H1 (cell line): ENCODE measurements at regions of chr21 and their contacts with region 1.

Region 1: DNA sequence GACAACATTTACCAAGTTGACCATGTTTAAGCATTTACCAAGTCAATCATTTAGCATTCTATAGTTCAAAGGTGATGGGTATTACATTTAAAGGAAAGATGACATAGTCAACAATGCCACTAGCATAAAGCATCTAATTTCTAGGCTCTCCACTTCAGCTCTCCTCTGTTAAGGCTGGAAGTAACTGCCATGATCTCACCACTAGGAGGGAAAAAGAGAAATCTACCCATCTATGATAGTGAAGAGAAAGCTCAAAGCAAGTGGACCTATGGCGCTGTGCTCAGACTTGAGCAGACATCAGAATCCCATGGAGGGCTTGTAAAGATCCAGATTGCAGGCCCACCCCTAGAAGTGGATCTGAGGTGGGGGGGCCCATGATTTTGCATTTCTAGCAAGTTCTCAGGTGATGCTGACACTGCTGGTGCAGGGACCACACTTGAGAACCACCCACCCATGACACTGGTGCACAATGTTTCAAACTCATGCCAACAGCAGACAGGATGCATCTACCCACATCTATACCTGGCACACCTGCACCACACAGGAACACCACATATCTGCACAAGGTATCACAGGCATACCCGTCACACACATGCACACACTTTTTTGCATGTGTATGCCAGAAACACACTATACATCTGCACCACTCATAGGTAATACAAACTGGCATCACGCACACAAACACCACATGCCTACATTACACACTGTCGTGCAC is 392.9 kb upstream of the RUNX1 start:
- DNase-seq: no peak
- H3K4me3 ChIP-seq: no peak overlapping the region
- H3K27ac ChIP-seq: no peak overlapping the region
- H3K4me1 ChIP-seq: peaks cover 0 to 2% (median 0%) of the 10 kb centered on the region in 4 experiments; a peak in 2 of 7 replicates
- H3K27me3 ChIP-seq: 0 out of 7 replicates have a peak, but pooled peaks cover 0 to 2% (median 0%) of the 10 kb centered on the region in 4 experiments
- CTCF ChIP-seq: peak in 1 of 3 experiments; percentile 25; a peak in 1 of 4 replicates
- EP300 ChIP-seq: no peak
- POLR2A ChIP-seq: no peak
- RAD21 ChIP-seq: peak in 1 of 2 experiments; percentile 20; a peak in 3 of 4 replicates

Region 2: GRCh38 chr21:35428001-35428320 is 14.1 kb before region 1 on chr21:
- CTCF ChIA-PET with region 1: interaction called, 10 read pairs
- POLR2A ChIA-PET with region 1: no interaction called
- DNase-seq: no peak
- H3K4me3 ChIP-seq: no peak overlapping the region
- H3K27ac ChIP-seq: no peak overlapping the region
- H3K4me1 ChIP-seq: peaks cover 0 to 4% (median 3%) of the 10 kb centered on the region in 4 experiments; a peak in 3 of 7 replicates
- H3K27me3 ChIP-seq: no peaks in the 10 kb centered on the region
- CTCF ChIP-seq: no peak
- EP300 ChIP-seq: no peak
- POLR2A ChIP-seq: no peak
- RAD21 ChIP-seq: no peak